ENCODE measurements at regions of chr14 and their contacts with region 1.

Region 1: DNA sequence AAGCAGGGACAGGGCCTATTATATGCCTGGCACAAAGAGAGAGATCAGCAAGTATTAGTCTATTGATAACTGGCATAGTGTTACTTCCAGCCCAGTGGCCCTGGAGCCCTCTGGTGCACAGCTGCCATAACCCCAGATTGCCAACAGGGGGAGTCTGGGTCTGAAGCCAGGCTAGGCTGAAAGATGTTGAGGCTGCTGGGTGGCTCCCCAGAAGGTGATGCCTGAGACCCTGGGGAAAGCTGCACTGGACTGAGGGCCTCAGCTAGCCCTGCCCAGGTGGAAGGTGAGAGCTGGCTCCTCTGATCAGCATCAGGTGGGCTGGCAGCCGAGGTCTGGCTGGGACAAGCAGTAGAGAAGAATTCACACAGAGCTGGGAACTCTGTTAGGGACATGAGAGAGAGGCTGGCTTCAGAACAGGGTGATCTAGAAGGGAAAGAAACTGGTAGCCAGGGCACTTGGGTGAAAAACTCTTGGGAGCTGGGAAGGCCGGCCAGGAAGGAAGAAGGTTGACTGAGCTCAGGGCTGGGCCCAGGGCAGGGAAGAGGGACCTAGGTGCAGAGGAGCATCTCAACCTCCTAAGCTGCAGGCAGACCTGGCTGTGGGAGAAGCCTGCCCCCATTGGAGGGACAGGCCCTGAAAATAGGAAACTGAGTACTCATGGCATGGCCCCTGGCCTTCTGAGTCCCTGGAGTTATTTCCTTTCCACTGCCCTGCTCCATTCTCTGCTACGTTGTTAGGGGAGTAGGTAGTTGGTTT is 3.9 kb downstream of the GZMH start:
- DNase-seq: peak; percentile 79
- H3K4me3 Mint-ChIP-seq: peak overlapping the region; percentile 32
- H3K27ac Mint-ChIP-seq: peak overlapping the region; percentile 73
- H3K4me1 Mint-ChIP-seq: peaks cover 49% of the 10 kb centered on the region
- H3K27me3 Mint-ChIP-seq: peaks cover 9% of the 10 kb centered on the region

Region 2: GRCh38 chr14:24634158-24634557 is 28.5 kb after region 1 on chr14 and contains the start of gene GZMB:
- CTCF ChIA-PET with region 1: interaction called, 15 read pairs
- DNase-seq: peak; percentile 55
- H3K4me3 Mint-ChIP-seq: peak within 1 kb of the TSS; percentile 35
- H3K27ac Mint-ChIP-seq: peak within 1 kb of the TSS; percentile 12
- H3K4me1 Mint-ChIP-seq: peaks cover 17% of the 10 kb centered on the region
- H3K27me3 Mint-ChIP-seq: peaks cover 7% of the 10 kb centered on the region

Region 3: GRCh38 chr14:24662753-24663152 is 57.1 kb after region 1 on chr14:
- CTCF ChIA-PET with region 1: interaction called, 16 read pairs
- DNase-seq: no peak
- H3K4me3 Mint-ChIP-seq: no peak overlapping the region
- H3K27ac Mint-ChIP-seq: peak overlapping the region; percentile 79
- H3K4me1 Mint-ChIP-seq: peaks cover 75% of the 10 kb centered on the region
- H3K27me3 Mint-ChIP-seq: no peaks in the 10 kb centered on the region

Region 4: GRCh38 chr14:24673534-24674203 is 68.1 kb after region 1 on chr14:
- CTCF ChIA-PET with region 1: interaction called, 54 read pairs
- DNase-seq: peak; percentile 82
- H3K4me3 Mint-ChIP-seq: peak overlapping the region; percentile 74
- H3K27ac Mint-ChIP-seq: peak overlapping the region; percentile 96
- H3K4me1 Mint-ChIP-seq: peaks cover 89% of the 10 kb centered on the region
- H3K27me3 Mint-ChIP-seq: no peaks in the 10 kb centered on the region

Region 5: DNA sequence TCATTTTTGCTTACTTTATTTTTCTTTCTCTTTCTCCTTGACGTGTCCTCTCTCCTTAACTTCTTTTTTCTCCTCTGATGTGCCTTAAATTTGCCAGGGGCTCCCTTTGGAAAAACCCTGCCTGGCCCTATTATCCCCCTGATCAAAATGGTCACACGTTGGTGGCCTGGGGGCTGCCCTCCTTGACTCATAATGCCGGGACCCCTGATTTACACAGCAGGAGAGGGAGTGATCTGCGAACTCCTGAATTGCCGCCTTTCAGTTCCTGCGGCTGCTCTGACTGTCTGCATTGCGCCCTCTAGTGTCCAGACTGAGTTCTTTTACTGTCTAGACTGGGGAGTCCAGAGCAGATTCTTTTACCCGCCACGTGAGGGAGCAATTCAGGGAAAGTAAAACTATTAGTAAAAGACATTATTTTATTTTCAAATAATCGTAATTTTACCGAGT is 73.2 kb after region 1 on chr14:
- CTCF ChIA-PET with region 1: interaction called, 54 read pairs
- DNase-seq: peak; percentile 85
- H3K4me3 Mint-ChIP-seq: peak overlapping the region; percentile 62
- H3K27ac Mint-ChIP-seq: peak overlapping the region; percentile 68
- H3K4me1 Mint-ChIP-seq: peaks cover 68% of the 10 kb centered on the region
- H3K27me3 Mint-ChIP-seq: no peaks in the 10 kb centered on the region

Region 6: DNA sequence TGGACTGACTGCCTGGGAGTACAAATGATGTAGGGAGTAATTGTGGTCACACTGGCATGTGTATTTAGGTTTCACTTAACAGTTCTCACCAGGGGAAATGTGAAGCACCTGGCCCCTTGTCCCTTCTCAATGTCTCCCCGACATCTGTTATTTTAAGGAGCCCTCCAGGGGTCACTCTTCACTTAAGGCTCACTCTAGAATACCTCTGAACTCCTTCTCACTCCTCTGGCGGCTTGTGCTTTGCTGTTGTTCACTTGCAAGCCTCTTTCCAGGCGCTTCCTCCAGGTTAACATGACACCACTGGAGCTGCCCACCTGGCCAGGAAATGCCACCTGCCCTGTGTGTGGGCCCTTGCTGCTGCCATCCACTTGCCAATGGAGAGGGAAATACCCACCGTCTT is 84.9 kb after region 1 on chr14:
- CTCF ChIA-PET with region 1: interaction called, 18 read pairs
- DNase-seq: peak; percentile 38
- H3K4me3 Mint-ChIP-seq: no peak overlapping the region
- H3K27ac Mint-ChIP-seq: no peak overlapping the region
- H3K4me1 Mint-ChIP-seq: peaks cover 35% of the 10 kb centered on the region
- H3K27me3 Mint-ChIP-seq: peaks cover 11% of the 10 kb centered on the region

Region 7: DNA sequence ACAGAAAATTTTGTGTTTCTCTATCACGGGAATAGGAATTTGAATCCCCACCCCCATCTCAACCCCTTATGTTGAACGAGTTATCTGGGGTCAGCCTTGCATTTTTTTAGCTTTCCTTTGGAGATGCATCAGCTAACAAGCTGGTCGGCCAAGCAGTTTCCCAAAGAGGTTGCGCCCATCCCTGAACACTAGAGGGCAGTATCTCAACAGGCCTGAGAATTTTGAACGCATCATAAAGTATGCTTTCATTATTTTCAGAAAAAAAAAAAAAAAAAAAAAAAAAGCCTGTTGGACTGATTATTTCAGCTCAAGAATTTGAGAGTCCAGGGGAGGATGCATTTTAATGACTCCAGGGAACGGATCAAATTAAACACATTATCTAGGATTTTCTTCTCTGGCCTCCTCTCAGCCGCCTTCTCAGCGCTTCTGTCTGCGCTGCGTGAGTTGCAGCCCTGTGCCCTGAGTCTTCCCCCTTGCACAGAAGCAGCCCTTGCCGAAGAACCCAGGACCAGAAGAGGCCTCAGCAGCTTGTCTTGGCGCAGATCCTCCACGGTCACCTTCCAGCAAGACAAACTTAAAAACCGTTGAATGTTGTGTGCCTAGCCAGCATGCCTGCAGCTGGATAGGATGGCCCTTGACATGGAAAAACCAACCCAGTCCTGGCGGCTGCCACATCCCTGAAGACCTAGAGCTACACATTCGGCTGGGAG is 104.9 kb after region 1 on chr14:
- CTCF ChIA-PET with region 1: interaction called, 10 read pairs
- DNase-seq: peak; percentile 71
- H3K4me3 Mint-ChIP-seq: no peak overlapping the region
- H3K27ac Mint-ChIP-seq: no peak overlapping the region
- H3K4me1 Mint-ChIP-seq: peaks cover 3% of the 10 kb centered on the region
- H3K27me3 Mint-ChIP-seq: peaks cover 27% of the 10 kb centered on the region

Region 8: DNA sequence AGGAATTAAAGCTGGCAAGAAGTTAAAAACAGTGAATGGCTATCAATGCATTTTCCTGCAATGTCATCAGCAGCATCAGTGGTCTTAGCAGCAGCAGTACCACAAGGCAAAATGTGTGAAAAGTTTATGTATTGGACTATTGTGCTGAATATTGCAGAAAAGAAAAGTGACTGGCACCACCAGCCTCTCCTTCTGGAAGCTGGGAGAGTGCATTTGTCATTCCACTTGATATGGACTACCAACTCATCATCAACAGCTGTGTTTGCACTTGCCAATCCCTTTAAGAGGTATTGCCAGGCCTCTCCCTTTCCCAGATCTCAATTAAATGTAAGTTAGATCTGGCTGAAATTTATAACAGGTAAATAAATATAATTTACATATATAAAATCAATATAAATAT is 179.4 kb after region 1 on chr14:
- CTCF ChIA-PET with region 1: no interaction called
- DNase-seq: no peak
- H3K4me3 Mint-ChIP-seq: no peak overlapping the region
- H3K27ac Mint-ChIP-seq: no peak overlapping the region
- H3K4me1 Mint-ChIP-seq: no peaks in the 10 kb centered on the region
- H3K27me3 Mint-ChIP-seq: peaks cover 4% of the 10 kb centered on the region

Region 9: DNA sequence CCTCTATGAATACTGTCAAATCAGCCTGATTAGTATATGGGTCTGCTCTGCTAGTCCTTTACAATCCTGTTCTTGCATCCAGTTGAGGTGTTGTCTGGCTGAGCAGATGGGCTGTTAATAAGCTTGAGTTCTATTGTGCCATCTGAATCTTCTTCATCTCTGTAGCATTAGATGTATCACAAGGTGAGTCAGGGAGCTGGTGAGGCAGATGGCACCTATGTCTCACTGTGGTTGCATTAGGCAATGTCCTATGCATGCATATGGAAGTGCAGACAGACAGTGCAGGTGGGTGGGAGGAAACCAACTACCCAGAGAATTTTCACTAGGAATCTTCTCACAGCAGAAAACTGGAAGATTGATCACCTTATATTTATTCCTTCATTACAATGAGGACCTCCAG is 610.0 kb after region 1 on chr14:
- CTCF ChIA-PET with region 1: no interaction called
- DNase-seq: no peak
- H3K4me3 Mint-ChIP-seq: no peak overlapping the region
- H3K27ac Mint-ChIP-seq: no peak overlapping the region
- H3K4me1 Mint-ChIP-seq: no peaks in the 10 kb centered on the region
- H3K27me3 Mint-ChIP-seq: no peaks in the 10 kb centered on the region